Common myeloid progenitor, CD34-positive (primary cell): ENCODE measurements at regions of chr14 and their contacts with region 1.

Region 1: DNA sequence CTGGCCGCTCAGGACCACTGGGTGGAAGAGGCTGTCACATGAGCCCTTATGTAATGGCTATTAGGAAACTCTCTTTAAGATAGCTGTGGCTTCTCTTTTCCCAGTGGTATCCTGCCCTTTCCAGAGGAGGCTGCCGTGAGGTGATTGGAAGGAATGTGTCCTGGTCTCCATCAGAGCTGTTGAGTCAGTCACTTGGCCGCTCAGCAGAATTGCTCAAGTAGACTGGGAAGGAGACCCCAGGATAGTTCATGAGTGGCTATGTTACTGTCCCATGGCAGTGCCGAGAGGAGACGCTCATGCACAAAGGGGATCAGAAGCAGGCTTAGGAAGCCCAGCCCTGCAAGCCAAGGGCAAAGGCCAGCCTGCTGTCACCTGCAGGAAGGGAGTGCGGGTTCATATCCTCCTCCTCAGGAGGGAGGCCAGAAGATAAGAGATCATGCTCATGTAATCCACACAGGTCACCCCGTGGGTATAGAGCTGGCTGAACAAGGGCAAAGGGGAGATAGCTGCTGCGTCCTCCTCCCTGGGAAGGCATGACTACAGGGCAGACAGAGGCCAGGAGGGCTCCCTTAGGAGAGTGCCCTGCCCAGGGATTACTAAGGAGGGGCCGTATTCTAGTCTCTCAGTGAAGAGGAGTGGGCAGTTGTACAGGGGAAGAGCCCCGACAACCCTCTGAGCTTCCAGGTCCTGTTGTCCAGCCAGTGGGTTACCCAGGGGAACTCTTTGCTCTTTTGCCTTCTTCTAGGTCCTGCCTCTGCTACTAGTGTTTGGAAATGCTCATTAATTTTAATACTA is 137.0 kb upstream of the MAX start:
- DNase-seq: no peak
- H3K4me3 ChIP-seq: no peak overlapping the region
- H3K27ac ChIP-seq: no peak overlapping the region
- H3K4me1 ChIP-seq: peaks cover 0 to 14% (median 11%) of the 10 kb centered on the region in 4 experiments
- H3K27me3 ChIP-seq: no peaks in the 10 kb centered on the region

Region 2: DNA sequence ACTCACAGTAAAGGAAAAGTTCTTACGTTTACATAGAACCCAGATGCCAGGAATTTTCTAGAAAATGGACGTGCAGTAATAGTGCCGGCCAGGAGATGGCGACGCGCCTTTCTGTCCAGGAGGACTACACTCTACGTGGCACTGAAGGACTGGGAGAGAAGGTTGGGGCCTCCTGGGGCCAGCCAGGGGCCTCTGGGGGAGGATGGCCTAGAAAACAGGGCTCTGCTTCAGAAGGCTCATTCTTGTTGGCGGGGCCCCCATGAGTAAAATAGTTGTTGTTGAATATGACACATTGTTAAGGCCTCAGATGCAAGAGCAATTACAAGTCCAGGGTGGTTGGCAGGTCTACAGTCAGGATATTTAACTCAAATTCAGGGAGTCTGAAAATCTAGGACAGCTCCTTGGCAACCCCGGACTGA is 16.9 kb before region 1 on chr14:
- CTCF ChIA-PET with region 1: interaction called, 10 read pairs
- POLR2A ChIA-PET with region 1: no interaction called
- DNase-seq: peak; percentile 47 to 54 (median 50)
- H3K4me3 ChIP-seq: no peak overlapping the region
- H3K27ac ChIP-seq: no peak overlapping the region
- H3K4me1 ChIP-seq: peaks cover 0 to 24% (median 9%) of the 10 kb centered on the region in 4 experiments
- H3K27me3 ChIP-seq: no peaks in the 10 kb centered on the region